Transverse colon (tissue), 4 donors: ENCODE measurements at regions of chr14 and their contacts with region 1.

Region 1: GRCh38 chr14:19851365-19851764 is 23.6 kb upstream of the OR4K2 start:
- DNase-seq: no peak
- H3K4me3 ChIP-seq: no peak overlapping the region
- H3K27ac ChIP-seq: no peak overlapping the region
- H3K4me1 ChIP-seq: no peaks in the 10 kb centered on the region
- H3K27me3 ChIP-seq: no peaks in the 10 kb centered on the region
- CTCF ChIP-seq: no peak
- EP300 ChIP-seq: no peak
- POLR2A ChIP-seq: no peak

Region 2: GRCh38 chr14:19930617-19931016 is 79.3 kb after region 1 on chr14 and contains the start of gene OR4K1:
- in situ Hi-C with region 1: no loop called
- intact Hi-C with region 1: loop called (anchors 2 kb)
- DNase-seq: no peak
- H3K4me3 ChIP-seq: no peak within 1 kb of the TSS
- H3K27ac ChIP-seq: no peak within 1 kb of the TSS
- H3K4me1 ChIP-seq: no peaks in the 10 kb centered on the region
- H3K27me3 ChIP-seq: no peaks in the 10 kb centered on the region
- CTCF ChIP-seq: no peak
- EP300 ChIP-seq: no peak
- POLR2A ChIP-seq: no peak
- total RNA-seq, gene OR4K1: not detected